Endothelial cell of umbilical vein (primary cell): ENCODE measurements at regions of chr7 and their contacts with region 1.

Region 1: DNA sequence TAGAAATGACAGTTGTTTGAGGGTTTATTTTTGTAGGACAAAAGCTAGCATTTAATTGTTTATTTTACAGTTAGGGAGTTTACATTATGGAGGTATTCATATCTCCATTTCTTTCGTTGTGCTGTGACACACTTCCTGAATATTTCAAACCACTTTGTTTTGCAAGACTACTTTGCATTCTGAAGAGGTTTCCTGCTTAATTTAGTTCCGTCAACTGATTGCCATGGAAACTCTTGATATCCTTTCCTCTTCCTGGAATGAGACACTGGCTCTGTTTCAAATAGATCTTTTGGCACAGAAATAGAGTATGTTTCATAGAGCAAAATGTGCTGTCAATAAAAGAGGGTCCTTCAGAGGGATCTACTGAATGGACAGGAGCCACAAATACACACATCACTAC is 159.5 kb upstream of the AGR3 start:
- DNase-seq: peak; percentile 94
- H3K4me3 ChIP-seq: peak overlapping the region in 1 of 3 experiments; percentile 30
- H3K27ac ChIP-seq: peak overlapping the region; percentile 88
- H3K4me1 ChIP-seq: peaks cover 52% of the 10 kb centered on the region
- H3K27me3 ChIP-seq: no peaks in the 10 kb centered on the region
- CTCF ChIP-seq: no peak
- POLR2A ChIP-seq: no peak

Region 2: DNA sequence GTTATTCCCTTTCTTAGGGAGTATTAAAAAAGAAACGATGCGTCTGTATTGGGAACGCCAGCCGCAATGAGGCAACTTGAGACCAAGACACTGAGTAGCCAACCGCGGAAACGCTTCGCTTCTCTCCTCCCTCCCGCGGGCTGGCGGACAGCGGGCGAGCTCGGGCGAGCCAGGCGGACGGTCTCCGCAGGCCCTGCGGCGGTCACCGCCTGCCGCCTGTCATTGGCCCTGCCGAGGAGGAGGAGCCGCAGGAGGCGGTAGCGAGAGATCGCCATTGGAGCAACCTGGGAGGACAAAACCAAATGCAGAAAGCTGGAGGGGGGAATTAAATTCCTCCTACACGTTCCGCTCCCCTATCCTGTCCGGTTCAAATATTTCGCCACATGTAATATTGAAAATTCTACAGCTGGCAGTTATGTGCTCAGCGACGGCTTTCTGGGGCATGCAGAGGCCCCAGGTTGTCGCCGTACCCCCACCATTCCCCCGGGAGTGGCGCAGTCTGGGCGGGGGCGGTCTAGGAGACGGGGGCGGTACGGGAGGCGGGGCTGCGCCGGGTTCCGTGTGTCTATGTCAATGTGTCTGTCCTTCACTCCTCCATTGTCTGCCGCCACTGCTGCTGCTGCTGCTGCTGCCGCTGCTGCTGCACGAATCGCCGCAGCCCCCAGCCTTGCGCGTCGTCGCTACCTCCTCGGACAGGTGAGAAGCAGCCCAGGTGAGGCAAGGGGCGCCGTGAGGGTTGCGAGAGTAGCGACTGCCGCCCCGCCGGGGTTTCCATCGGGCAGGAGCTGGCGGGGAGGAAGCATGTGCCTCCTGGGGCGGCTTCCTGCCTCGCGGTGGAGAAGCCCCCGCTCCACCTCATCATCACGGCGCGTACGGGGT is 395.5 kb before region 1 on chr7 and contains the starts of genes ANKMY2 and BZW2:
- CTCF ChIA-PET with region 1: no interaction called
- POLR2A ChIA-PET with region 1: no interaction called
- dilution Hi-C with region 1: no loop called
- intact Hi-C with region 1: loop called (anchors 5 kb)
- DNase-seq: peak; percentile 97
- H3K4me3 ChIP-seq: peak within 1 kb of the TSS; percentile 74 to 98 (median 98)
- H3K27ac ChIP-seq: peak within 1 kb of the TSS; percentile 91
- H3K4me1 ChIP-seq: peaks cover 46% of the 10 kb centered on the region
- H3K27me3 ChIP-seq: no peaks in the 10 kb centered on the region
- CTCF ChIP-seq: no peak
- POLR2A ChIP-seq: peak; percentile 96
- total RNA-seq, gene ANKMY2: 9.8 and 11.6 TPM in 2 replicates
- total RNA-seq, gene BZW2: 95.3 and 106 TPM in 2 replicates

Region 3: DNA sequence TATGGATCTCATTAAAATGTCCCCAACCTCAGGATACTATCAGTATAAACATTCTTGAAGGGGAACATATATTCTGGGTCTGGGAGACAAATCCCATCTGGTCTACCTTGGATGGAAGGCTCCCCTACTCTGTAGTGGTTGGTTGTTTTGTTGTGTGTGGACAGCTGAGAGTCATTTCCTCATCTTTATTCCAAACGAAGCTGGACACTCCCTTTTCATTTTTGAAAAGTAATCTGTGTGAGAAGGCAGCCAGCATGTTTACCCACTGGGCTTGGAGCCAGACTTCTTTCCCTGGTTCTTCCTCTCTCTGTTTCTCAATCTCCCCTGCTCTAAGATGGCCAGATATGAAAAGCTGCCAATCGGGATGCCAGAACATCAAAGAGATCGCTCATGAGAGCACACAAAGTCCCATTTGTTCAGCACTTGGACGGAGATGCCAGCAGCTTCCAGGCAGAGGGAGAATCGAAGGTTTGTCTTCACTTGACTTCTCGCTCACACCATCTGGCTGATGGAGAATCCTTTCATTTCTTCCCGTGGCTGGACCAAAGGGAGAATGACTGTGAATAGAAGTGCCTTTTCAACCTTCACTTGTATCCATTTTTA is 51.4 kb before region 1 on chr7:
- CTCF ChIA-PET with region 1: no interaction called
- POLR2A ChIA-PET with region 1: no interaction called
- dilution Hi-C with region 1: no loop called
- intact Hi-C with region 1: loop called (anchors 1 kb)
- DNase-seq: peak; percentile 93
- H3K4me3 ChIP-seq: peak overlapping the region in 1 of 3 experiments; percentile 55
- H3K27ac ChIP-seq: peak overlapping the region; percentile 4
- H3K4me1 ChIP-seq: peaks cover 13% of the 10 kb centered on the region
- H3K27me3 ChIP-seq: no peaks in the 10 kb centered on the region
- CTCF ChIP-seq: no peak
- POLR2A ChIP-seq: no peak

Region 4: GRCh38 chr7:17063045-17063383 is 21.7 kb after region 1 on chr7:
- CTCF ChIA-PET with region 1: interaction called, 10 read pairs
- POLR2A ChIA-PET with region 1: no interaction called
- dilution Hi-C with region 1: no loop called
- intact Hi-C with region 1: loop called (anchors 1 kb)
- DNase-seq: no peak
- H3K4me3 ChIP-seq: no peak overlapping the region
- H3K27ac ChIP-seq: no peak overlapping the region
- H3K4me1 ChIP-seq: peaks cover 16% of the 10 kb centered on the region
- H3K27me3 ChIP-seq: no peaks in the 10 kb centered on the region
- CTCF ChIP-seq: no peak
- POLR2A ChIP-seq: no peak

Region 5: DNA sequence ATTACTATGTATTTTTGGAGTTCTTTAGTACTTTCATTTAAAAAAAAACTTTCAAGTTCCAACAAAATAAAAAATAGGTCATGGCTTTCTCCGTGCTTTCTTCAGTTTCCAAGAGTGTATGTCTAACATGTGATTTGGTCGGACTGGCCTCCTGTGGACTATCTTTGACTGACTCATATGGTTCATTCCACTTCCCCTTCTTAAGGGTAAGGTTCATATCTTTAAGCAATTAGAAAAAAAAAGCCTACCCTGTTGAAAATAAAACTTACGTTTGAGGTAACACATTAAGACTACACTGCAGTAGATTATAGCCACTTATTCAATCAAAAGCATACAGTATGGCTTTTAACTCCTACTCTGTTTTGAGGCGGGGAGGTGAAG is 144.4 kb after region 1 on chr7:
- CTCF ChIA-PET with region 1: no interaction called
- POLR2A ChIA-PET with region 1: no interaction called
- dilution Hi-C with region 1: no loop called
- intact Hi-C with region 1: no loop called
- DNase-seq: peak; percentile 45
- H3K4me3 ChIP-seq: no peak overlapping the region
- H3K27ac ChIP-seq: no peak overlapping the region
- H3K4me1 ChIP-seq: peaks cover 11% of the 10 kb centered on the region
- H3K27me3 ChIP-seq: no peaks in the 10 kb centered on the region
- CTCF ChIP-seq: no peak
- POLR2A ChIP-seq: no peak

Region 6: DNA sequence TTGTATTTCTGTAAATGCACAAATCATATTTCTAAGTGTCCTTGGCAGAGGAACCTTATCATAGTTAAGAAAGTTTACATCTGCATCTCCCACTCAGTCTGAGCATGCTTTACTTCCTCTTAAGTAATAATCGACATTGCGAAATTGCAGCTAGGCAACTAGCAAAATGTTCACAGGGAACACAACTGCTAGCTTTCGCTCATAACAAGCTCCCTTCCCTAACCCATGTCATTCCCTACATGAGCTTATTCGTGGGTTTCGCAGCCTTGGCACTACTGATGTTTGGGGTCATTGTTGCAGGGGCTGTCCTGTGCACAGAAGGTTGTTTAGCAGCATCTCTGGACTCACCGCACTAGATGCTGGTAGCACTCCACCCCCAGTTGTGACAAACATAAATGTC is 328.8 kb after region 1 on chr7:
- CTCF ChIA-PET with region 1: no interaction called
- POLR2A ChIA-PET with region 1: no interaction called
- dilution Hi-C with region 1: no loop called
- intact Hi-C with region 1: loop called (anchors 1 kb)
- DNase-seq: no peak
- H3K4me3 ChIP-seq: no peak overlapping the region
- H3K27ac ChIP-seq: no peak overlapping the region
- H3K4me1 ChIP-seq: peaks cover 23% of the 10 kb centered on the region
- H3K27me3 ChIP-seq: no peaks in the 10 kb centered on the region
- CTCF ChIP-seq: no peak
- POLR2A ChIP-seq: no peak

Region 7: GRCh38 chr7:17444673-17445072 is 403.3 kb after region 1 on chr7:
- CTCF ChIA-PET with region 1: no interaction called
- POLR2A ChIA-PET with region 1: no interaction called
- dilution Hi-C with region 1: no loop called
- intact Hi-C with region 1: loop called (anchors 5 kb)
- DNase-seq: peak; percentile 94
- H3K4me3 ChIP-seq: peak overlapping the region in 1 of 3 experiments; percentile 56
- H3K27ac ChIP-seq: peak overlapping the region; percentile 91
- H3K4me1 ChIP-seq: peaks cover 35% of the 10 kb centered on the region
- H3K27me3 ChIP-seq: no peaks in the 10 kb centered on the region
- CTCF ChIP-seq: no peak
- POLR2A ChIP-seq: no peak